ENCODE measurements at regions of chr14 and their contacts with region 1.

Region 1: GRCh38 chr14:91286530-91286937 is 42.0 kb upstream of the GPR68 start:
- DNase-seq: peak; percentile 68
- H3K4me3 Mint-ChIP-seq: no peak overlapping the region
- H3K27ac Mint-ChIP-seq: peak overlapping the region; percentile 66
- H3K4me1 Mint-ChIP-seq: peaks cover 13% of the 10 kb centered on the region
- H3K27me3 Mint-ChIP-seq: no peaks in the 10 kb centered on the region

Region 2: GRCh38 chr14:91114079-91115065 is 172.2 kb before region 1 on chr14:
- intact Hi-C with region 1: no loop called
- DNase-seq: peak; percentile 77
- H3K4me3 Mint-ChIP-seq: peak overlapping the region; percentile 95
- H3K27ac Mint-ChIP-seq: peak overlapping the region; percentile 92
- H3K4me1 Mint-ChIP-seq: peaks cover 59% of the 10 kb centered on the region
- H3K27me3 Mint-ChIP-seq: no peaks in the 10 kb centered on the region

Region 3: DNA sequence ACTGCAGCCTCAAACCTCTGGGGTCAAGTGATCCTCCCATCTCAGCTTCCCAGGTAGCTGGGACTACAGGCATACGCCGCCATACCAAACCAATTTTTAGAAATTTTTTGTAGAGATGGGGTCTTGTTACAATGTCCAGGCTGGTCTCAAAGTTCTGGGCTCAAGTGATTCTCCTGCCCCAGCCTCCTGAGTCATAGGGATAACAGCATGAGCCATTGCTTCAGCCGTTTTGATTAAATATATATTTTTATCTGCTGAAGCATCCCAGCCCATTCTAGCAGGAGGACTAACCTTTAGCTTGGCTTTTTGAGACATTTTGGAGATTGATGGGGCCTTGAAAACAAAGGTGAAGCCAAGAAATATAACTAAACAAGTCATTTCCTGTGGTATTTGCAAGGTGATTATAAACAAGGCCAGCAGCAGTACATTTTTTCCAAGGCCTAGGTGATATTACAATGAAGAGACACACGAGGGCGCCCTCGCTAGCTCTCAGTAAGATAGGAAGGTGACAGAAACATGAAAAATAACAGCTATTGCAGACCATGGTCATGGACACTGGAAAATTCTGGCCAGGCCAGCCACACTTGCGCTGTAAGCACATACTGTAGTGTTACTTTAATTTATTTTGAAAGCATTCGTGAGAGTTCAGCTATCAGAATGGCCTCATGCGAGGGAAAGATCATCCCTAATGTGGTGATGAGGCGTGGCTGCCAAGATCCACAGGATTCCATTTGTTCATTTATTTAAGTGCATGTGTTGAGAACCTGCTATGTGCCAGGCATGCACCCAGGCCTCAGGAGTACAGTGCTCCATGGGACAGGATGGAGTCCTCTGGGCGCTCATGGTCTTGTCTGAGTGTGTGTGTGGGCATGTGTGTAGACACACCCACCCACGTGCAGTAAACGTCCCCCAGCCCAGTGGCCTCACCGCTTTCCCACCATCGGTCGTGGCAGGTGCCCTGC is 109.2 kb before region 1 on chr14:
- intact Hi-C with region 1: loop called (anchors 1 kb)
- DNase-seq: peak; percentile 69
- H3K4me3 Mint-ChIP-seq: no peak overlapping the region
- H3K27ac Mint-ChIP-seq: peak overlapping the region; percentile 86
- H3K4me1 Mint-ChIP-seq: peaks cover 17% of the 10 kb centered on the region
- H3K27me3 Mint-ChIP-seq: no peaks in the 10 kb centered on the region

Region 4: DNA sequence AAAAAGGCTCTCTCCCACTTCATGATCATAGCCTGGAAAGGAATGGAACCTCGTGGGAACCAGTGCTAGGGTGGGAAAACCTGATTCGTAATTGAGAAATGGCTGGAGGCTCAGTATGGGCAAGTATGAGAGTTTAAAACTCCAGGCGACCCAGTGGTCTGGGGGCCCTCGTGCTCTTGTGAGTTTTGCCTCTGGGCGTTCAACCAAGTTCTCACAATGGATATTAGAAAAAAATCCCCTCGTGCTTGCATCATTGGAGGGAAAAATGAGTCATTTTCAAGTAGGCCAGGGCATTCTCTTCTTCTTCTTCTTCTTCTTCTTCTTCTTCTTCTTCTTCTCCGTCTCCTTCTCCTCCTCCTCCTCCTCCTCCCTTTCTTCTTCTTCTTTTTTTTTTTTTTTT is 81.1 kb before region 1 on chr14:
- intact Hi-C with region 1: no loop called
- DNase-seq: no peak
- H3K4me3 Mint-ChIP-seq: no peak overlapping the region
- H3K27ac Mint-ChIP-seq: peak overlapping the region; percentile 40
- H3K4me1 Mint-ChIP-seq: peaks cover 38% of the 10 kb centered on the region
- H3K27me3 Mint-ChIP-seq: no peaks in the 10 kb centered on the region

Region 5: DNA sequence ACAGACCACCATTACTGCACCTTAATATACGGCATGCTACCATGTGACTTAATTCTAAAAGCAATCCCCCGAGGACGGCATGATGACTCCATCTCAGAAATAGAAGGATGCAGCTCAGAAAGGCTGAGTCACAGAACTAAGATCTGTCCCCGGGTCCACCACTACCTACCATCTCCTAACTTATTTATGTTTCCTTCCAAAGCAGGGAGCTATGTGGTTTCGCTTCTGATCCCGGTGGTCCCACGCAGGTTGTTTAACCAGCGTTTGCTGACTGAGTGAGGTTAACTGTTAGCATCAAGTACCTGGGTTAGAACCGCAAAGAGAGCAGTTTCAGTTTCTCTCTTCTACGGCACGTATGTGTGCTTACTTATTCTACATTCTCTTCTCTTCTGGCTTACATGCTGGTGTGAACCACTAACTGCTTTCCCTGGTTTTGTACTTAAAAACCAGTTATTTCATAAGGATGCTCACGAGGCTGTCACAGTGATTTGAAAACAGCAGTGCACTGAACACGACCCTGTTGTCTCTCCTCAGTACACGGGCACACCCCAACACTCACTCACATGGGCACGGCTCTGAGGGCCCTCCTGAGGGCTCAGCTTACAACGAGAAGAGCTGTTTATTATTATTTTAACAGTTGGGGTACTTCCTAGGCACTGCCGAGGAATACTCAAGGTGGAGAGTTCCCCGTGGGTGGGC is 64.4 kb after region 1 on chr14:
- intact Hi-C with region 1: no loop called
- DNase-seq: peak; percentile 75
- H3K4me3 Mint-ChIP-seq: peak overlapping the region; percentile 72
- H3K27ac Mint-ChIP-seq: peak overlapping the region; percentile 87
- H3K4me1 Mint-ChIP-seq: peaks cover 80% of the 10 kb centered on the region
- H3K27me3 Mint-ChIP-seq: no peaks in the 10 kb centered on the region